HepG2 (cell line): ENCODE measurements at regions of chr17 and their contacts with region 1.

Region 1: GRCh38 chr17:1865252-1866037 is 35.6 kb downstream of the RPA1 start:
- DNase-seq: peak; percentile 35
- ATAC-seq: no peak
- H3K4me3 ChIP-seq: no peak overlapping the region
- H3K27ac ChIP-seq: no peak overlapping the region
- H3K4me1 ChIP-seq: no peaks in the 10 kb centered on the region
- H3K27me3 ChIP-seq: no peaks in the 10 kb centered on the region
- CTCF ChIP-seq: peak; percentile 56
- EP300 ChIP-seq: no peak
- POLR2A ChIP-seq: no peak
- RAD21 ChIP-seq: peak; percentile 46

Region 2: GRCh38 chr17:1793447-1793806 is 72.0 kb before region 1 on chr17:
- CTCF ChIA-PET with region 1: no interaction called
- POLR2A ChIA-PET with region 1: no interaction called
- in situ Hi-C with region 1: no loop called
- intact Hi-C with region 1: loop called (anchors 5 kb)
- DNase-seq: no peak
- ATAC-seq: no peak
- H3K4me3 ChIP-seq: no peak overlapping the region
- H3K27ac ChIP-seq: no peak overlapping the region
- H3K4me1 ChIP-seq: peaks cover 9% of the 10 kb centered on the region
- H3K27me3 ChIP-seq: no peaks in the 10 kb centered on the region
- CTCF ChIP-seq: no peak
- EP300 ChIP-seq: no peak
- POLR2A ChIP-seq: no peak
- RAD21 ChIP-seq: no peak